ENCODE measurements at regions of chr1 and their contacts with region 1.

Region 1: DNA sequence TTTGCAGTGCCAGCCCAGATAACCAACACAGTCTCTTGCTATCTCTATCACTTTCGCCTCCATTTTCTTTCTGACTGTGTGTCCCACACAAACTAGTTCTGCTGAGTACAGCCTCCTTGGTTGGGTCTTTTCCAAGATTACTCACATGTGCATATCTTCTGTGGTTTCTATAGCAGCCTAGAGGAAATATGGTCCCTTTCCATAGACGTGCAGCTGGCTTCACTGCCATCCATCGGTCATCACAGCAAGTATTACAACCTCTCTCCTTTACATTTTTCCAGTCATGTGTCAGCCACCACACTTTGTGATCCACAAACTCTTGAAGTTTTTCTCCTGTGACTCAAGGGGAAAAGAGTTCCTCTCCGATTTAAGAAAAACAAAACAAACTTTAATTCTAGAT is 893.4 kb upstream of the ADGRL4 start:
- DNase-seq: peak; percentile 80
- H3K4me3 ChIP-seq: no peak overlapping the region
- H3K27ac ChIP-seq: no peak overlapping the region
- H3K4me1 ChIP-seq: peaks cover 5% of the 10 kb centered on the region
- H3K27me3 ChIP-seq: no peaks in the 10 kb centered on the region
- CTCF ChIP-seq: no peak

Region 2: DNA sequence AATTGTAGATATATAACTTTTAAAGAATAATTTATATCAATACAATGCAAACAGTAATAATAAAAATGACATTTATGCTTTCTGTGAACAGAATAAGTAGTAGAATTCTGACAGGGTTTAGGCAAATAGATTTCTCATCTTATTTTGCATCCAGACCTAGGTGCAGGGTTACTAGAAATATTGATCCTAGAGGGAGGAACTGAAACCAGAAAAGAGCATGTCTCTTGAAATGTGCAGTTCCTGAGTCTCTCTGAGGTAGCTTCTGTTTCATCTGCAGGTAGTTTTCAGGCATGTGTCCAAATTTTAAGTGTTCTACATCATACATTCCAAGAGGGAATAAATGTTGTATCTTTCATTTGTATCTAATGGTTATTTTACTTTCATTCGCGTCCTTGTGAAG is 261.5 kb before region 1 on chr1:
- CTCF ChIA-PET with region 1: no interaction called
- dilution Hi-C with region 1: no loop called
- in situ Hi-C with region 1: no loop called
- intact Hi-C with region 1: no loop called
- DNase-seq: no peak
- H3K4me3 ChIP-seq: no peak overlapping the region
- H3K27ac ChIP-seq: no peak overlapping the region
- H3K4me1 ChIP-seq: no peaks in the 10 kb centered on the region
- H3K27me3 ChIP-seq: no peaks in the 10 kb centered on the region
- CTCF ChIP-seq: no peak

Region 3: GRCh38 chr1:79887059-79887458 is 12.9 kb before region 1 on chr1:
- CTCF ChIA-PET with region 1: no interaction called
- dilution Hi-C with region 1: no loop called
- in situ Hi-C with region 1: no loop called
- intact Hi-C with region 1: no loop called
- DNase-seq: no peak
- H3K4me3 ChIP-seq: no peak overlapping the region
- H3K27ac ChIP-seq: no peak overlapping the region
- H3K4me1 ChIP-seq: no peaks in the 10 kb centered on the region
- H3K27me3 ChIP-seq: no peaks in the 10 kb centered on the region
- CTCF ChIP-seq: no peak

Region 4: GRCh38 chr1:79950511-79950910 is 50.6 kb after region 1 on chr1:
- CTCF ChIA-PET with region 1: no interaction called
- dilution Hi-C with region 1: no loop called
- in situ Hi-C with region 1: no loop called
- intact Hi-C with region 1: loop called (anchors 2 kb)
- DNase-seq: no peak
- H3K4me3 ChIP-seq: no peak overlapping the region
- H3K27ac ChIP-seq: no peak overlapping the region
- H3K4me1 ChIP-seq: no peaks in the 10 kb centered on the region
- H3K27me3 ChIP-seq: no peaks in the 10 kb centered on the region
- CTCF ChIP-seq: no peak

Region 5: GRCh38 chr1:79969886-79970285 is 70.0 kb after region 1 on chr1:
- CTCF ChIA-PET with region 1: no interaction called
- dilution Hi-C with region 1: loop called (anchors 5 kb)
- in situ Hi-C with region 1: no loop called
- intact Hi-C with region 1: no loop called
- DNase-seq: no peak
- H3K4me3 ChIP-seq: no peak overlapping the region
- H3K27ac ChIP-seq: no peak overlapping the region
- H3K4me1 ChIP-seq: no peaks in the 10 kb centered on the region
- H3K27me3 ChIP-seq: peaks cover 2% of the 10 kb centered on the region
- CTCF ChIP-seq: peak in 1 of 2 donors; percentile 20

Measured in mammary epithelial cell (primary cell).